B cell (primary cell): ENCODE measurements at regions of chr19 and their contacts with region 1.

Region 1: DNA sequence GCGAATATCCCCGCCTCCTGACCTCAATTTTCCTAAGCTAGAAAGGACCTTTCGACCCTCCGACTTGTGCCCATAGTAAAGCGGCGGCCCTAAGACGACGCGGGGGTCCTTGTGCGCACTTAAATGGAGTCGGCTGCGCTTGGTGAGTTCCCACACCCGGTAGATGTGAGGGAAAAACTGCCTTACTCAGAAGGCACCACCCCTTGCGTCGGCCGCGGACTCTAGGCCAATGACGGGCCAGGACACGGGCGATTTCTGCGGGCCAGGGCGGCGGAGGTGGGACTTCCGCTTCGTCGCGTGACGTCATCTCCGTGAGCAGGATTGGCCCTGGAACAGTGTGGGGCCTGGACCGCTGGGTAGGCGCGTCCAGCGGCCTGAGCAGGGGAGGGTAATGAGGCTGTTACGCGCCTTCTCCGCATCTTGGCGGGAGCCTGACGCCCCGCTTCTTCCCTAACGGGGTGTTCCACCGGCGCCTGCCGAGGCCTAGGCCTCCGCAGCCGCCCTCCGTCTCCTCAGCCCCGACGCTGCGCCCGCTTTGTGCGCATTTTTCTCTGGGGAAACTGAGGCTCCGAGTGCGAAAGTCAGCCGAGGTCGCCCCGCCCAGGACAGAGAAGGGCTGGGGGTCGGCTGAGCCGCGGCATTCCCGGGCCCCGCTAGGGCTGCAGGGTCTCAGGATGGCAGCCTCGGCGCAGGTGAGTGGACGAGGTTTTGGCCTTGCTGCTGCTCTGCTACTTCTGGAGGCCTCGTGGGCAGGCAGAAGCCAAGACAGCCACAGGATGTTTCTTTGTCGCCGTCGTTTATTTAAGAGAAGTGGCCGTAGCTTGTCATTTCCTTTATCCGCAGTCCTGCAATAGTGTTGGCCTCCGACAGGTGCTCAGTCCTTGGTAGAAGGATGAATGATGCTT is at the start of gene ZNF543:
- DNase-seq: peak; percentile 96
- ATAC-seq: peak; percentile 98
- H3K4me3 ChIP-seq: peak within 1 kb of the TSS; percentile 50 to 95 (median 89)
- H3K4me3 Mint-ChIP-seq: peak within 1 kb of the TSS; percentile 93
- H3K27ac ChIP-seq: peak within 1 kb of the TSS; percentile 85 to 89
- H3K27ac Mint-ChIP-seq: peak within 1 kb of the TSS; percentile 96
- H3K4me1 ChIP-seq: peaks cover 19 to 23% of the 10 kb centered on the region in 2 donors
- H3K4me1 Mint-ChIP-seq: peaks cover 32% of the 10 kb centered on the region
- H3K27me3 ChIP-seq: peaks cover 0 to 21% (median 13%) of the 10 kb centered on the region in 4 experiments
- H3K27me3 Mint-ChIP-seq: peaks cover 24% of the 10 kb centered on the region
- CTCF ChIP-seq: no peak
- total RNA-seq, gene ZNF543: 16.7 and 19.6 TPM in 2 replicates

Region 2: DNA sequence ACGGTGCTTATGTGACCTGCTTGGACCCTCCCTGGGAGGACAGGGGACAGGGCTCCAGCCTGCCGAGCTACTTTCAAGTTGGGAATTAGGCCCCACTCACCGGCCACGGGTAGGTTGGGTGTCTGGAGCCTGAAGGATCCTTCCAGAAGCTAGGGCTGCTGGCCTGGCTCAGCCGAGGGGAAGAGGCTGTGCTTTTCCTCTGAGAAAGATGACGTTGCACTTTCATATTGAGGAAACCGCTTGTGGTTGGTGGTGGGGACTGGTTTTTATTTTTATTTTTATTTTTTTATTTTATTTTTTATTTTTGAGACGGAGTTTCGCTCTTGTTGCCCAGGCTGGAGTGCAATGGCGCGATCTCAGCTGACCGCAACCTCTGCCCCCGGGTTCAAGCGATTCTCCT is 1995.3 kb before region 1 on chr19 and contains the start of gene TMEM150B:
- CTCF ChIA-PET with region 1: no interaction called
- POLR2A ChIA-PET with region 1: no interaction called
- intact Hi-C with region 1: no loop called
- DNase-seq: no peak
- ATAC-seq: no peak
- H3K4me3 ChIP-seq: no peak within 1 kb of the TSS
- H3K4me3 Mint-ChIP-seq: no peak within 1 kb of the TSS
- H3K27ac ChIP-seq: no peak within 1 kb of the TSS
- H3K27ac Mint-ChIP-seq: no peak within 1 kb of the TSS
- H3K4me1 ChIP-seq: peaks cover 0 to 4% of the 10 kb centered on the region in 2 donors
- H3K4me1 Mint-ChIP-seq: no peaks in the 10 kb centered on the region
- H3K27me3 ChIP-seq: peaks cover 0 to 10% (median 1%) of the 10 kb centered on the region in 4 experiments
- H3K27me3 Mint-ChIP-seq: peaks cover 37% of the 10 kb centered on the region
- CTCF ChIP-seq: no peak
- total RNA-seq, gene TMEM150B: not detected in 2 replicates

Region 3: GRCh38 chr19:57279418-57280066 is 40.9 kb before region 1 on chr19:
- CTCF ChIA-PET with region 1: no interaction called
- POLR2A ChIA-PET with region 1: interaction called, 4 read pairs
- intact Hi-C with region 1: loop called (anchors 1 kb)
- DNase-seq: peak; percentile 92
- ATAC-seq: peak; percentile 73
- H3K4me3 ChIP-seq: peak overlapping the region; percentile 73 to 94 (median 91)
- H3K4me3 Mint-ChIP-seq: no peak overlapping the region
- H3K27ac ChIP-seq: peak overlapping the region; percentile 98 to 100
- H3K27ac Mint-ChIP-seq: no peak overlapping the region
- H3K4me1 ChIP-seq: peaks cover 29 to 33% of the 10 kb centered on the region in 2 donors
- H3K4me1 Mint-ChIP-seq: peaks cover 31% of the 10 kb centered on the region
- H3K27me3 ChIP-seq: no peaks in the 10 kb centered on the region
- H3K27me3 Mint-ChIP-seq: no peaks in the 10 kb centered on the region
- CTCF ChIP-seq: peak; percentile 26

Region 4: DNA sequence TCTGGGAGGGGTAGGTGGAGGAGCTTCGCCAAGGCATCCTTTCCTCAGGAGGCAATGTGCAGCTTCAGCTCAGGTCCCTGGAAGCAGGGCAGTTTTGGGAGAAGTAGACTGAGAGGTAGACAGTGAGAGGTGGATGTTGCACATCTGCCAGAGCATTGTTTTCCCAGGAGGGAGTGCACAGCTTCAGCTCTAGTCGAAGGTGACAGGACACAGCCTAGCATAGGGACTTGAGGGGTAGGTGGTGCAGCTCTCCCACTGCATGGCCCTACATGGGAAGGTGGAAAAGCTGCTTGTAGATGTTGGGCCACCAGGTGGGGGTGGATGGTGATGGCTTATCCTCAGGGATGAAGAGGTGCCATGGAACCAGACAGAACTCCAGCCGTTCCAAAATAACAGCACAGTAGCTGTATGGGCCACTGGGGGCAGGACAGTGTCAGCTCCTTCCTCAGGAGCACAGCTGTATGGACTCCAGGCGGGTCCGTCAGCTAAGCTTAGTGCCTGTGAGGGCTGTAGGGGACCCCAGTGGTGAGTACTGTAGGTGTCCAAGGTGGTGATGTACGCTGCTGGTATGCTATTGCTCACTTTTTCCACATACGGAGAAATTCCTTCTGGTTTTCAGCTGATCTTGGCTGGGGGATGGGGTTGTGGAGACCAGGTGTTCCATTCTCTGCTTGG is 17.6 kb before region 1 on chr19:
- CTCF ChIA-PET with region 1: no interaction called
- POLR2A ChIA-PET with region 1: interaction called, 10 read pairs
- intact Hi-C with region 1: no loop called
- DNase-seq: no peak
- ATAC-seq: no peak
- H3K4me3 ChIP-seq: no peak overlapping the region
- H3K4me3 Mint-ChIP-seq: no peak overlapping the region
- H3K27ac ChIP-seq: no peak overlapping the region
- H3K27ac Mint-ChIP-seq: no peak overlapping the region
- H3K4me1 ChIP-seq: no peaks in the 10 kb centered on the region
- H3K4me1 Mint-ChIP-seq: peaks cover 12% of the 10 kb centered on the region
- H3K27me3 ChIP-seq: no peaks in the 10 kb centered on the region
- H3K27me3 Mint-ChIP-seq: no peaks in the 10 kb centered on the region
- CTCF ChIP-seq: no peak

Region 5: DNA sequence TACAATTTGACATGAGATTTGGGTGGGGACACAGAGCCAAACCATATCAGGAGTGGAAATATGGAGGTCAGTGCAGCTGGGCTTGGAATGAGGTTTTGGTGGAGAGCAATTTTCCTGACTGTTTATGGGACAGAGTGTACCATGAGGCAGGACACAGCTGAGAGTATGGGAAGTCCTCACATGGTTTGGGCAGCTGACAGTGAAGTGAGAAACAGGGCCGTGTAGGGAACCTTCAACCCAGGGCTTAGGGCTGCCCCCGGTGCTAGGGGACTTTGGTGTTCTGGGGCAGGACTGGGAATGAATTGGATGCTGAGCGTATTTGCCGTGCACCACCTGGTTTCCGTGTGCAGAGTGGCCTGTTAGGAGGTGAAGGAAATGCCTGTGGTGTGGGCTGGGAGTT is 75.3 kb after region 1 on chr19:
- CTCF ChIA-PET with region 1: no interaction called
- POLR2A ChIA-PET with region 1: no interaction called
- intact Hi-C with region 1: no loop called
- DNase-seq: no peak
- ATAC-seq: no peak
- H3K4me3 ChIP-seq: no peak overlapping the region
- H3K4me3 Mint-ChIP-seq: no peak overlapping the region
- H3K27ac ChIP-seq: no peak overlapping the region
- H3K27ac Mint-ChIP-seq: no peak overlapping the region
- H3K4me1 ChIP-seq: peaks cover 4 to 5% of the 10 kb centered on the region in 2 donors
- H3K4me1 Mint-ChIP-seq: peaks cover 12% of the 10 kb centered on the region
- H3K27me3 ChIP-seq: no peaks in the 10 kb centered on the region
- H3K27me3 Mint-ChIP-seq: no peaks in the 10 kb centered on the region
- CTCF ChIP-seq: no peak